ENCODE measurements at regions of chr5 and their contacts with region 1.

Region 1: DNA sequence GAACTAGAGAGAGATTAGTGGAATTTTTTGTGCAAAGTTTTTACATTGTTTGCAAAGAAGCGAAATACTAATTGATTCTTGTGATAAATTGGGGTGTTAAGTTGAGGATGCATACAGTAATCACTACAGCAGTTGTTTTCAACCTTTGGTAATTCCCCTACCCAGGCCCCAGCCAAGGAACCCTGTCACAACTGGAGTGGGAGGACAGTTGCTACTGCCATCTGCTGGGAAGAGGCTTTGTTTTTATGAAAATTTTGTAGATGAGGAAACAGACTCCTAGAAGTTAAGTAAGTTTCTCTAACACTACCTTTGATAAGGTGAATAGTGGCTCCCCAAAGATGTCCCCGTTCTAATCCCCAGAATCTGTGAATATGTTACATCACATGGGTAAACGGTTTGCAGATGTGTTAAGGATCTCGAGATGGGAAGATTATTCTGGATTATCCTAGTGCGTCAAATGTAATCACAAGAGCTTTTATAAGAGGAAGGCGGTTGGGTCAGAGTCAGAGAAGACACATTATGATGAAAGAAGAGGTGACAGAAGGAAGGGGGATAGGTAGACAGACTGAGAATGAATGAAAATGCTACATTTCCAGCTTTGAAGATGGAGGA is 34.0 kb upstream of the PPP1R2B start:
- DNase-seq: peak; percentile 46 to 47
- H3K4me3 ChIP-seq: no peak overlapping the region
- H3K4me3 Mint-ChIP-seq: no peak overlapping the region
- H3K27ac Mint-ChIP-seq: no peak overlapping the region
- H3K4me1 ChIP-seq: 0 out of 2 replicates have a peak, but pooled peaks cover 6% of the 10 kb centered on the region
- H3K4me1 Mint-ChIP-seq: peaks cover 11% of the 10 kb centered on the region
- H3K27me3 ChIP-seq: no peaks in the 10 kb centered on the region
- H3K27me3 Mint-ChIP-seq: no peaks in the 10 kb centered on the region
- CTCF ChIP-seq: peak; percentile 58 to 60

Region 2: DNA sequence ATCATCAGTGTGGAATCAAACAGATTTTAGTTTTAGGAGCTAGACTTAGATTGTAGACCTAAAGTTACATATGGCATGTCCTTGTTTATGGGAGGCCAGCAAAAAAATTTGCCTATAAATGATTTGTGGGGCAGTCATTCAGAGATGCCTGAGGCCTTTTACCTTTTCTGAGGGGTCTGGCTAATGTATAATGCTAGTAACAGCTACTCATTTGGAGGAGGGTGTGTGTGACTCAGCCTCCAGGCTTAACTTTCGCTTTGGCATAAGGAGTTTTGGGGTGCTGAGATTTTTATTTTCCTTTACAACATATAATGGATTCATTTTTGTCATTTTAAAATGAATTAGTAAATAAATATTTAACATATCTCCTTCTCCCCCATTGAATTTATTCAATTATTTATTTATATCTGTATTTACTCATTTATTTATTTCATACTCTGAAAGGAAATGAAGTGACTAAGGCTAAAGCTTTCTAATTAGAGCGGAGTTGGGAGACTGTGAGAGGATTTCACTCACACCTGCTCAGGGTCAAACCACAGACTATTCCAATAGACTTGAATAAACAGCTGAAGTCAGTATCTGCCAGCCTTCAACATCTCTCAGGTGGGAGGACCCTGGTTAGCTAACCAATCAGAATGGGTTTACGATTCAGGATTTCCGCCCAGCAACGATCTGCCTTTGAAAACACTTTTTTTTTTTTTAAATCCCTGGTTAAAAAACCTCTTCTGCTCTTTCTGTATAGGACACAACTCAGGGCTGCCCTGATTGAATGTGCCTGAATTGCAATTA is 976.6 kb before region 1 on chr5:
- CTCF ChIA-PET with region 1: no interaction called
- POLR2A ChIA-PET with region 1: no interaction called
- intact Hi-C with region 1: loop called (anchors 10 kb)
- DNase-seq: peak in 1 of 2 experiments; percentile 4
- H3K4me3 ChIP-seq: no peak overlapping the region
- H3K4me3 Mint-ChIP-seq: no peak overlapping the region
- H3K27ac Mint-ChIP-seq: no peak overlapping the region
- H3K4me1 ChIP-seq: no peaks in the 10 kb centered on the region
- H3K4me1 Mint-ChIP-seq: no peaks in the 10 kb centered on the region
- H3K27me3 ChIP-seq: no peaks in the 10 kb centered on the region
- H3K27me3 Mint-ChIP-seq: no peaks in the 10 kb centered on the region
- CTCF ChIP-seq: no peak

Region 3: GRCh38 chr5:156675395-156675794 is 140.7 kb before region 1 on chr5:
- CTCF ChIA-PET with region 1: no interaction called
- POLR2A ChIA-PET with region 1: no interaction called
- intact Hi-C with region 1: loop called (anchors 5 kb)
- DNase-seq: no peak
- H3K4me3 ChIP-seq: no peak overlapping the region
- H3K4me3 Mint-ChIP-seq: no peak overlapping the region
- H3K27ac Mint-ChIP-seq: no peak overlapping the region
- H3K4me1 ChIP-seq: peaks cover 7% of the 10 kb centered on the region; the same call in 1 of the 2 replicates
- H3K4me1 Mint-ChIP-seq: no peaks in the 10 kb centered on the region
- H3K27me3 ChIP-seq: no peaks in the 10 kb centered on the region
- H3K27me3 Mint-ChIP-seq: no peaks in the 10 kb centered on the region
- CTCF ChIP-seq: no peak

Region 4: DNA sequence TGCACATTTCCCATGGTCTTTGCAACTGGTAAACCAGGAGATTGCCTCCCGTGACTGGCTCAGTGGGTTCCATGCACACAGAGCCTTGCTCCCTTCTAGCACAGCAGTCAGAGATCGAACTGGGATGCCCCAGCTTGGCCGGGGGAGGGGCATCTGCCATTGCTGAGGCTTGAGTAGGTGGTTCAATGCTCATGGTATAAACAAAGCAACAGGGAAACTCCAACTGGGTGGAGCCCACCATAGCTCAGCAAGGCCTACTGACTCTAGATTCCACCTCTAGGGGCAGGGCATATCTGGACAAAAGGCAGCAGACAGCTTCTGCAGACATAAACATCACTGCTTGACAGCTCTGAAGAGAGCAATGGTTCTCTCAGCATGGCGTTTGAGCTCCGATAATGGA is 33.0 kb before region 1 on chr5:
- CTCF ChIA-PET with region 1: no interaction called
- POLR2A ChIA-PET with region 1: no interaction called
- intact Hi-C with region 1: no loop called
- DNase-seq: no peak
- H3K4me3 ChIP-seq: no peak overlapping the region
- H3K4me3 Mint-ChIP-seq: no peak overlapping the region
- H3K27ac Mint-ChIP-seq: no peak overlapping the region
- H3K4me1 ChIP-seq: no peaks in the 10 kb centered on the region
- H3K4me1 Mint-ChIP-seq: no peaks in the 10 kb centered on the region
- H3K27me3 ChIP-seq: no peaks in the 10 kb centered on the region
- H3K27me3 Mint-ChIP-seq: no peaks in the 10 kb centered on the region
- CTCF ChIP-seq: no peak